CD4-positive, alpha-beta T cell (primary cell): ENCODE measurements at regions of chr5 and their contacts with region 1.

Region 1: DNA sequence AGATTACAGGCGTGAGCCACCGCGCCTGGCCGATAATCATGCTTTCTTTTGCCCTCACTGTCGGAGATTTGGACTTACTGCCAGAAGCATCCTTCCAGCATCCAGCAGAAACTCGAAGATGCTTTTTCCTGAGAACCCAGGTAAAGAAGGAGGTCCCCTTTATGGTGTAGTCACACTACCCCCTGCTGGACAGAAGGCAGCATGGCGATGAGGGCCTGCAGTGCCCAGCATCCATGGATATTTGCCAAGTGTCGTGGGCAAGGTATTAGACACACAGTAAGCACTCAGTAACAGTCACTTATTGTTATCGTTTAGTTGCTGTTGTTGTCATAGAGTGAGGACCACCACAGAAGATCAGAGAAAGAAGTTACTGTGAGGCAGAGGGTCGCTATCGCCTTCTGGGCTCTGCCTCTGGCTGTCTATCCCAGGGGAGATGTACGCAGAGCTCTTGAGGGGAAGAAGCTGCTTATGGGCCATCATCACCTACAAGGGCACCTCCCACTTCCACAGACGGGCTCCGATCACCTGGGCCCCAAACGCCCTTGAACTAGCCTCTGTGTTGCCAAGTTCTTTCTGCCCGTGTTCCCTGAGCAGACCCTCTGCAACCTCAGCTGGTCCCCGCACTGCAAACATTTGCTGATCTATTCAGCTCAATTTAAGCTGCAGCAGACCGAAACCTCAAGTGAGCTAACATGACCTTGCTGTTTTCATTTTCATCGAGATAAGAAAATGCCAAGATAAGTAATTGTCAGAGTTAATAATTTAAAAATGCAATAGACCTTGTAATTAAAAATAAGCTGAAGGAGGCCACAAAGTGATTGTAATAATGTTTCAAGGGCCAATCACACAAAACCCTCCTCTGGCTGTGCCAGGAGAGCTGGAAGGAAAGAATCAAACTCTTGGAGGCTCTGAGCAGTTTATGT is 23.9 kb downstream of the C5orf15 start:
- DNase-seq: peak in 7 of 14 experiments; percentile 9 to 60 (median 18)
- ATAC-seq: no peak
- H3K4me3 ChIP-seq: no peak overlapping the region
- H3K4me3 Mint-ChIP-seq: no peak overlapping the region
- H3K27ac ChIP-seq: no peak overlapping the region
- H3K27ac Mint-ChIP-seq: no peak overlapping the region
- H3K4me1 ChIP-seq: no peaks in the 10 kb centered on the region
- H3K4me1 Mint-ChIP-seq: no peaks in the 10 kb centered on the region
- H3K27me3 ChIP-seq: no peaks in the 10 kb centered on the region
- H3K27me3 Mint-ChIP-seq: no peaks in the 10 kb centered on the region
- CTCF ChIP-seq: no peak

Region 2: GRCh38 chr5:133423618-133424282 is 520.8 kb before region 1 on chr5:
- CTCF ChIA-PET with region 1: no interaction called
- POLR2A ChIA-PET with region 1: no interaction called
- intact Hi-C with region 1: loop called (anchors 10 kb)
- DNase-seq: peak; percentile 46 to 76 (median 56)
- ATAC-seq: peak; percentile 78
- H3K4me3 ChIP-seq: no peak overlapping the region
- H3K4me3 Mint-ChIP-seq: no peak overlapping the region
- H3K27ac ChIP-seq: no peak overlapping the region
- H3K27ac Mint-ChIP-seq: no peak overlapping the region
- H3K4me1 ChIP-seq: peaks cover 11% of the 10 kb centered on the region
- H3K4me1 Mint-ChIP-seq: peaks cover 9% of the 10 kb centered on the region
- H3K27me3 ChIP-seq: no peaks in the 10 kb centered on the region
- H3K27me3 Mint-ChIP-seq: no peaks in the 10 kb centered on the region
- CTCF ChIP-seq: peak; percentile 94

Region 3: DNA sequence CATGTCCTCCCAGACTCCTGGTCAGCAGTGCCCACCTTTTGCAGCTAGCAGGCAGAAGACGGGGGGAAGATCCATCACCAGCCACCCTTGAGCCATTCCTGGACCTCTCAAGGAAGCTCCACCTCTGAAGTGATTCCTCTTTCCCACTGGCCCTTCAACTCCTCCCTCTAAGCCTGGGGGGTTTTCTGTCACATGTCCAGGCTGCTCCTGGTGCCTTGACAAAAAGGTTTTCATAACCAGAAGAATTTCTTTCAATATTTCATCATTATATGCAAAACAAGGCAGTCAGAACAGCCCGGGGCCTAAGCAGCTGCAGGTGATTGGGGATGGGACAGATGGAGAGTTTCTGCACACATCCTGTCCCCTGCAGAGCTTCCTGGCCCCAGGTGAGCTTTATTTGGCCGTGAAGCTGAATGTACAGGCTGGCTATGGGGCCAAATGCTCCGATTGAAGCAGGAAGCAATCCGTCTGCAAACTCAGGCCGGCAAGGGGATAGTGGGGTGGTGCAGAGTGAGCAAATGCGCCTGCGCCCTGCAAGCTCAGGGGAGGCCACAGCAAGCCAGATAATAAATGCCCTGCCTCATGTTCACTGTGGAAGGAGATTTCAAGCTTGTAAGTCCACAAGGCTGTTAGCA is 149.6 kb before region 1 on chr5:
- CTCF ChIA-PET with region 1: no interaction called
- POLR2A ChIA-PET with region 1: no interaction called
- intact Hi-C with region 1: no loop called
- DNase-seq: no peak
- ATAC-seq: no peak
- H3K4me3 ChIP-seq: no peak overlapping the region
- H3K4me3 Mint-ChIP-seq: no peak overlapping the region
- H3K27ac ChIP-seq: no peak overlapping the region
- H3K27ac Mint-ChIP-seq: no peak overlapping the region
- H3K4me1 ChIP-seq: no peaks in the 10 kb centered on the region
- H3K4me1 Mint-ChIP-seq: no peaks in the 10 kb centered on the region
- H3K27me3 ChIP-seq: peaks cover 5 to 7% of the 10 kb centered on the region in 2 experiments
- H3K27me3 Mint-ChIP-seq: peaks cover 20% of the 10 kb centered on the region
- CTCF ChIP-seq: no peak